ENCODE measurements at regions of chr9 and their contacts with region 1.

Region 1: GRCh38 chr9:91659529-91660495 is 236.2 kb upstream of the NFIL3 start:
- DNase-seq: no peak
- H3K4me3 ChIP-seq: no peak overlapping the region
- H3K27ac ChIP-seq: no peak overlapping the region
- H3K4me1 ChIP-seq: no peaks in the 10 kb centered on the region
- H3K27me3 ChIP-seq: no peaks in the 10 kb centered on the region
- CTCF ChIP-seq: peak; percentile 43 to 50

Region 2: GRCh38 chr9:91495450-91495849 is 164.4 kb before region 1 on chr9:
- CTCF ChIA-PET with region 1: no interaction called
- dilution Hi-C with region 1: loop called (anchors 25 kb)
- in situ Hi-C with region 1: no loop called
- intact Hi-C with region 1: no loop called
- DNase-seq: peak; percentile 86
- H3K4me3 ChIP-seq: no peak overlapping the region
- H3K27ac ChIP-seq: no peak overlapping the region
- H3K4me1 ChIP-seq: peaks cover 2% of the 10 kb centered on the region
- H3K27me3 ChIP-seq: peaks cover 5% of the 10 kb centered on the region
- CTCF ChIP-seq: no peak